PC-3 (cell line): ENCODE measurements at regions of chr5 and their contacts with region 1.

Region 1: GRCh38 chr5:72611118-72611730 is 104.0 kb upstream of the ZNF366 start:
- DNase-seq: peak; percentile 69
- ATAC-seq: peak; percentile 73
- H3K4me3 ChIP-seq: no peak overlapping the region
- H3K27ac ChIP-seq: no peak overlapping the region
- H3K4me1 ChIP-seq: peaks cover 21% of the 10 kb centered on the region
- H3K27me3 ChIP-seq: no peaks in the 10 kb centered on the region
- CTCF ChIP-seq: peak; percentile 87

Region 2: GRCh38 chr5:72531496-72532190 is 79.6 kb before region 1 on chr5:
- CTCF ChIA-PET with region 1: no interaction called
- POLR2A ChIA-PET with region 1: no interaction called
- intact Hi-C with region 1: loop called (anchors 5 kb)
- DNase-seq: peak; percentile 4
- ATAC-seq: no peak
- H3K4me3 ChIP-seq: no peak overlapping the region
- H3K27ac ChIP-seq: no peak overlapping the region
- H3K4me1 ChIP-seq: no peaks in the 10 kb centered on the region
- H3K27me3 ChIP-seq: no peaks in the 10 kb centered on the region
- CTCF ChIP-seq: no peak

Region 3: DNA sequence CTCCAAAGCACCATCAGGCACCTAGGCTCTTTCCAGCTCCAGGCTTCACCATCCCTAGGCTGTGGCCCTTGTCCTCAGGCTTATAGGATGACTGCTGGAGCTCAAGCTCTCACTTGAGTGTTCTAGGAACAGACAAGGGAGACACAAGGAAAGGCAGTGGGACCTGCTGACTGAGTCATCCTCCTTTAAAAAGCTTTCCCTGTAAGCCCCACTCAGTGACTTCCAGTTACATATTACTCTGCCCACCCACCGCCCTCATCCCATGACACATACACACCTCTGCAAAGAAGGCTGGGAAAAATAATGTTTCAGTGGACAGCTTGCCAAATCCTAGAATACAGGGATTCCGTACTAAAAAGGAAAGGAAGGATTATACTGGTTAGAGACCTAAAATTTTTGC is 50.2 kb after region 1 on chr5:
- CTCF ChIA-PET with region 1: no interaction called
- POLR2A ChIA-PET with region 1: no interaction called
- intact Hi-C with region 1: loop called (anchors 10 kb)
- DNase-seq: peak; percentile 75
- ATAC-seq: peak; percentile 91
- H3K4me3 ChIP-seq: 0 out of 2 replicates have a peak overlapping the region, but pooled peaks have one; percentile 3
- H3K27ac ChIP-seq: peak overlapping the region; percentile 36
- H3K4me1 ChIP-seq: peaks cover 25% of the 10 kb centered on the region
- H3K27me3 ChIP-seq: no peaks in the 10 kb centered on the region
- CTCF ChIP-seq: no peak

Region 4: GRCh38 chr5:72788866-72789505 is 177.8 kb after region 1 on chr5:
- CTCF ChIA-PET with region 1: no interaction called
- POLR2A ChIA-PET with region 1: no interaction called
- intact Hi-C with region 1: loop called (anchors 10 kb)
- DNase-seq: peak; percentile 82
- ATAC-seq: peak; percentile 97
- H3K4me3 ChIP-seq: no peak overlapping the region
- H3K27ac ChIP-seq: peak overlapping the region; percentile 73
- H3K4me1 ChIP-seq: peaks cover 21% of the 10 kb centered on the region
- H3K27me3 ChIP-seq: no peaks in the 10 kb centered on the region
- CTCF ChIP-seq: no peak

Region 5: DNA sequence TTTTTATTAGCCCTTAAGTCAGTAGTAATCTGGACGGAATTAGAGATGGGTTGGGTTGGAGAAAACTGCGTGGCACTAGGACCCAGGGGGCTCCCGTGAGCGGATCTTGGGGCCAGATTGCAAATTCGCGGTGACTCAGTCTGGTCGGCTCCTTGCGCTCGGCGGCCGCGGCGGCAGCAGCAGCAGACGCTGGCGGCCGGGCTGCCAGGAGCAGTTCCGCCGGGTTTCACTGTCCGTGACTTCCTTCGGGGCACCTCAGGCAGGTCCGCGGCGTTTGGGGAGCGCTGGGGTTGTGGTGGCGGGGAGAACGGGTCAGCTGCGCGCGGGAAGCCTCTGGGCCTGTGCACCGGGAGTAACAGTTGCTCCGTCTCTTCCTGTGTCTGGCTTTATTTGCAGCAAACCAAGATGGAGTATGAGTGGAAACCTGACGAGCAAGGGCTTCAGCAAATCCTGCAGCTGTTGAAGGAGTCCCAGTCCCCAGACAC is 236.8 kb after region 1 on chr5:
- CTCF ChIA-PET with region 1: no interaction called
- POLR2A ChIA-PET with region 1: no interaction called
- intact Hi-C with region 1: loop called (anchors 10 kb)
- DNase-seq: peak; percentile 82
- ATAC-seq: peak; percentile 79
- H3K4me3 ChIP-seq: peak overlapping the region; percentile 95
- H3K27ac ChIP-seq: peak overlapping the region; percentile 75
- H3K4me1 ChIP-seq: peaks cover 26% of the 10 kb centered on the region
- H3K27me3 ChIP-seq: no peaks in the 10 kb centered on the region
- CTCF ChIP-seq: no peak